Heart left ventricle (tissue), 16 donors: ENCODE measurements at regions of chr6 and their contacts with region 1.

Region 1: GRCh38 chr6:169921853-169922824 is 170.7 kb downstream of the ERMARD start:
- DNase-seq: no peak
- ATAC-seq: peak in 2 of 4 donors; percentile 29 to 34
- H3K4me3 ChIP-seq: no peak overlapping the region
- H3K27ac ChIP-seq: no peak overlapping the region
- H3K4me1 ChIP-seq: no peaks in the 10 kb centered on the region
- H3K27me3 ChIP-seq: peaks cover 0 to 3% (median 0%) of the 10 kb centered on the region in 9 donors
- CTCF ChIP-seq: no peak
- POLR2A ChIP-seq: no peak

Region 2: DNA sequence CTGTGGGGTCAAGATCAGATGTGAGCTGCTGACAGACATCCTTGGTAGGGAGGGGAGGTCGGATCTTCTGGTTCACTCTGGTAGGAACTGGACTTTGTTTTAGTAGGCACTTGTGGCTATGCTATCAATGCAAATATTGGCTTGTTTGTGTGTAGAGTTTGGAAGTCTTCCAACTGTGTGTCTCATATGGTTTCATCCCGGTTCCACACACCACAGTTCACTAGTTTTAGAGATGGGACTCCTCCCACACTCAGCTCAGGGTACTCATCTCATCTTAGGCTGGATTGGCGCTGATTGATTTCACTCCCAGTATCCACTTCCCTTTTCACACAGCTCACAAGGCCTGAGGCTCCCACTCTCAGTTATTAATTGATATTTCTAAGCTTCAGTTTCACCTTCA is 829.8 kb before region 1 on chr6:
- intact Hi-C with region 1: loop called in 1 of 10 experiments (anchors 10 kb)
- DNase-seq: no peak
- ATAC-seq: no peak
- H3K4me3 ChIP-seq: no peak overlapping the region
- H3K27ac ChIP-seq: no peak overlapping the region
- H3K4me1 ChIP-seq: peaks cover 0 to under 1% (median 0%) of the 10 kb centered on the region in 12 donors
- H3K27me3 ChIP-seq: peaks cover 0 to 1% (median 0%) of the 10 kb centered on the region in 9 donors
- CTCF ChIP-seq: no peak
- POLR2A ChIP-seq: no peak